ENCODE measurements at regions of chr1 and their contacts with region 1.

Region 1: GRCh38 chr1:109984456-109985275 is at the start of gene AHCYL1:
- DNase-seq: peak; percentile 100
- ATAC-seq: peak; percentile 99
- H3K4me3 Mint-ChIP-seq: peak within 1 kb of the TSS; percentile 92
- H3K27ac Mint-ChIP-seq: peak within 1 kb of the TSS; percentile 95
- H3K4me1 Mint-ChIP-seq: peaks cover 31% of the 10 kb centered on the region
- H3K27me3 Mint-ChIP-seq: no peaks in the 10 kb centered on the region
- total RNA-seq, gene AHCYL1: 79.1 to 82.6 TPM

Region 2: GRCh38 chr1:109483672-109484518 is 500.8 kb before region 1 on chr1 and contains the start of gene ATXN7L2:
- CTCF ChIA-PET with region 1: no interaction called
- POLR2A ChIA-PET with region 1: no interaction called
- intact Hi-C with region 1: loop called in 1 of 2 experiments (anchors 1 kb)
- DNase-seq: peak; percentile 96
- ATAC-seq: peak; percentile 79
- H3K4me3 Mint-ChIP-seq: peak within 1 kb of the TSS; percentile 88
- H3K27ac Mint-ChIP-seq: peak within 1 kb of the TSS; percentile 96
- H3K4me1 Mint-ChIP-seq: peaks cover 33% of the 10 kb centered on the region
- H3K27me3 Mint-ChIP-seq: no peaks in the 10 kb centered on the region
- total RNA-seq, gene ATXN7L2: 11.7 to 13.0 TPM

Region 3: GRCh38 chr1:109643385-109644230 is 341.1 kb before region 1 on chr1:
- CTCF ChIA-PET with region 1: interaction called, 39 read pairs
- POLR2A ChIA-PET with region 1: interaction called, 5 read pairs
- intact Hi-C with region 1: loop called (anchors 2 kb)
- DNase-seq: peak; percentile 95
- ATAC-seq: peak; percentile 98
- H3K4me3 Mint-ChIP-seq: no peak overlapping the region
- H3K27ac Mint-ChIP-seq: no peak overlapping the region
- H3K4me1 Mint-ChIP-seq: peaks cover 10% of the 10 kb centered on the region
- H3K27me3 Mint-ChIP-seq: no peaks in the 10 kb centered on the region

Region 4: GRCh38 chr1:109739738-109740660 is 244.7 kb before region 1 on chr1:
- CTCF ChIA-PET with region 1: interaction called, 3 read pairs
- POLR2A ChIA-PET with region 1: no interaction called
- intact Hi-C with region 1: loop called in 1 of 2 experiments (anchors 1 kb)
- DNase-seq: peak; percentile 92
- ATAC-seq: peak; percentile 99
- H3K4me3 Mint-ChIP-seq: peak overlapping the region; percentile 82
- H3K27ac Mint-ChIP-seq: peak overlapping the region; percentile 79
- H3K4me1 Mint-ChIP-seq: peaks cover 16% of the 10 kb centered on the region
- H3K27me3 Mint-ChIP-seq: peaks cover 1% of the 10 kb centered on the region

Region 5: GRCh38 chr1:109802901-109803561 is 181.6 kb before region 1 on chr1:
- CTCF ChIA-PET with region 1: interaction called, 10 read pairs
- POLR2A ChIA-PET with region 1: no interaction called
- intact Hi-C with region 1: no loop called
- DNase-seq: no peak
- ATAC-seq: peak; percentile 22
- H3K4me3 Mint-ChIP-seq: peak overlapping the region; percentile 34
- H3K27ac Mint-ChIP-seq: peak overlapping the region; percentile 92
- H3K4me1 Mint-ChIP-seq: peaks cover 54% of the 10 kb centered on the region
- H3K27me3 Mint-ChIP-seq: no peaks in the 10 kb centered on the region

Region 6: GRCh38 chr1:109923131-109923945 is 61.3 kb before region 1 on chr1:
- CTCF ChIA-PET with region 1: interaction called, 4 read pairs
- POLR2A ChIA-PET with region 1: no interaction called
- intact Hi-C with region 1: loop called in 1 of 2 experiments (anchors 5 kb)
- DNase-seq: peak; percentile 44
- ATAC-seq: peak; percentile 51
- H3K4me3 Mint-ChIP-seq: no peak overlapping the region
- H3K27ac Mint-ChIP-seq: no peak overlapping the region
- H3K4me1 Mint-ChIP-seq: no peaks in the 10 kb centered on the region
- H3K27me3 Mint-ChIP-seq: no peaks in the 10 kb centered on the region

Region 7: GRCh38 chr1:110011527-110012041 is 26.9 kb after region 1 on chr1:
- CTCF ChIA-PET with region 1: interaction called, 33 read pairs
- POLR2A ChIA-PET with region 1: no interaction called
- intact Hi-C with region 1: loop called in 1 of 2 experiments (anchors 1 kb)
- DNase-seq: peak; percentile 41
- ATAC-seq: peak; percentile 95
- H3K4me3 Mint-ChIP-seq: no peak overlapping the region
- H3K27ac Mint-ChIP-seq: no peak overlapping the region
- H3K4me1 Mint-ChIP-seq: no peaks in the 10 kb centered on the region
- H3K27me3 Mint-ChIP-seq: no peaks in the 10 kb centered on the region